ENCODE measurements at regions of chrX and their contacts with region 1.

Region 1: DNA sequence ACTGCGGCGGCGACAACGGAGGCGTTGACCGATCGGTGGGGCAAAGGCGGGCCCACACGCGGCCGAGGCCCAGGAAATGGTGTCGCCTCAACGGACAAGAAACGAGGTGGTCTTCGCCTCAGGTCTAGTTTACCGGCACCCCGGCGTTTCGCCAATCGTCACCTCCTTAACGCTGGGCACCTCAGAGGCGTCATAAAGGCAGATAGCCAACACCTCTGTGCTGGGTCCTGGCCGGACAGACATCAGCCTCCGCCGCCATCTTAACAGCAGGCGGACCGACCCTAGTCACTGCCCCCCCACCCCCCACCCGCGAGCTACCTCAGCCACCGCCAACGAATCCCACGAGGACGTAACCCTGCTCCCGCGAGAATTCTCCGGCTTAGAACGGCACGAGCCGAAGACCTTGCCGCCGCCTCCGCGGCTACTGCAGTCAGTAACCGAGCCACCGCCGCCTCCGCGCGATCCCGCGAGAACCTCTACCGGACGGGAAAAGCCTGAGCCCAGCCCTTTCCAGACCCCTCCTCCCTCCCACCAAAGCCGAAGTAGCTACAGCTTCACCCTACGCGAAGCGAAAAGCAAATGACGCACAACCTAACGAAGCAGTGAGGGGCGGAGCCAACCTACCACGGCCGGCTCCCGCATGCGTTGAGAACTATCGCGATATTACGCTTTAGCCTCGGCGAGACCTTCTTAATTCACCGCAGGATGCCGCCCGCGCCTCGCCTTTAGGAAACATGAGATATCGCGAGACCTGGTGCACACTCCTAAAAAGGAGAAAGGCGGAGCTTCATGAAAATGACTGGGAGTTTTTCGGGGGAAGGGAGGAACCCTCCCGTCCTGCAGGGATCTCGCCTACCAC is 2.7 kb downstream of the HUWE1 start:
- DNase-seq: peak; percentile 69
- ATAC-seq: peak; percentile 68
- H3K4me3 Mint-ChIP-seq: peak overlapping the region; percentile 91
- H3K27ac Mint-ChIP-seq: peak overlapping the region; percentile 97
- H3K4me1 Mint-ChIP-seq: peaks cover 40% of the 10 kb centered on the region
- H3K27me3 Mint-ChIP-seq: no peaks in the 10 kb centered on the region
- CTCF ChIP-seq: no peak

Region 2: DNA sequence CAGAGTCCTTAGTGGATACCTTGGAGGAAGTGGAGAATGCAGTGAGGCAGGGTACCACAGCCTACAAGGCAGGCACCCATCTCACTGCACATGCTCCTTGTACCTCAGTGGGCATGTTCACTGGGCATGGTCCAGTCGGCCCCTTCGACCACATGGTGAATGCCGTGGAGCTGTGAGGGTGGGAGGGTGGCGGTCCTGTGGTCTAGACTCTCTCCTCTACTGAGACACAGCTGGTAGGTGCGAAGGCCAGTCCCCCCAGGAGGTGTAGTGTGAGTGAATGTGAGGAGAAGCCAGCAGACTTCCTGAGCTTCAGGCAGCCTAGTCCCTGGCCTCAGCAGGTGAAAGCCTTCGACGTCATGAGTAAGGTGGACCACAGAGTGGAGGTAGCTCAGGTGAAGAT is 1302.8 kb before region 1 on chrX:
- CTCF ChIA-PET with region 1: no interaction called
- POLR2A ChIA-PET with region 1: no interaction called
- intact Hi-C with region 1: no loop called
- DNase-seq: no peak
- ATAC-seq: no peak
- H3K4me3 Mint-ChIP-seq: no peak overlapping the region
- H3K27ac Mint-ChIP-seq: no peak overlapping the region
- H3K4me1 Mint-ChIP-seq: no peaks in the 10 kb centered on the region
- H3K27me3 Mint-ChIP-seq: no peaks in the 10 kb centered on the region
- CTCF ChIP-seq: no peak

Region 3: DNA sequence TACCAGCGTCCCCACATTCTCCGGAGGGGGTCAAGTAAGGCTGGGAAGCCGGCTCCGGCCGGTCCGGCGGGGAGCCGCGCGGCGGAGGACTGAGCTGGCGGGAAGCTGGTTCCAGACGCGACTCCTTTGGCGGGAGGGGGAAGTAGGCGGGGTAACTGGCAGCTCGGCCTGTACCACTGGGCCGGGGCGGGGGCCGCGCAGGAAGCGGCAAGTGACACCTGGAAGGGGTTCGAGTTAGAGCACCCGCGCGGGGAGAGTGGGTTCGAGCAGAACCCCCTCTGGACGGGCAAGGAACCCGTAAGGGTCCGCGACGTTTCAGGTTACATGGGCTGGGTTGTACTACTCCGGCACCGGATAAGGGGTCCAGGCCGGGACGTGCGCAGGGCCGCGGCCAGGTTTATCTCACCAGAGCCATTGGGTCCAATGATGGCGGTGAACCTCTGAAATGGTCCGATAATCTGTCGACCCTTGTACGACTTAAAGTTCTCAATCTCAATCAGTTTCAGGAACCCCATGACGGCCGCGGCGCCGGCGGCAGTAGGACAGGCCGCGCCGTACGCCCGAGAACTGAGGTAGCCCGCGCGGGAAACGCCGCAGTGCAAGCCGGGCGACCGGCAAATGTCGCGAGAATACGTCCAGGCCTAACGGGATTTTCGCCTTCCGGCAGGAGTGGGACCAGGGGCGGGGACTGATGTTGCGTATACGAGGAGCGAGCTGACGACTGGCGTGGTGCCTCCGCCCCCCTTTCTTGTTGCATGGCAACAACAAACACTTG is 261.5 kb before region 1 on chrX and contains the start of gene SMC1A:
- CTCF ChIA-PET with region 1: no interaction called
- POLR2A ChIA-PET with region 1: interaction called, 8 read pairs
- intact Hi-C with region 1: loop called (anchors 1 kb)
- DNase-seq: peak; percentile 79
- ATAC-seq: peak; percentile 89
- H3K4me3 Mint-ChIP-seq: peak within 1 kb of the TSS; percentile 92
- H3K27ac Mint-ChIP-seq: peak within 1 kb of the TSS; percentile 96
- H3K4me1 Mint-ChIP-seq: peaks cover 29% of the 10 kb centered on the region
- H3K27me3 Mint-ChIP-seq: no peaks in the 10 kb centered on the region
- CTCF ChIP-seq: no peak
- total RNA-seq, gene SMC1A: 75.8 and 84.0 TPM in 2 replicates

Region 4: DNA sequence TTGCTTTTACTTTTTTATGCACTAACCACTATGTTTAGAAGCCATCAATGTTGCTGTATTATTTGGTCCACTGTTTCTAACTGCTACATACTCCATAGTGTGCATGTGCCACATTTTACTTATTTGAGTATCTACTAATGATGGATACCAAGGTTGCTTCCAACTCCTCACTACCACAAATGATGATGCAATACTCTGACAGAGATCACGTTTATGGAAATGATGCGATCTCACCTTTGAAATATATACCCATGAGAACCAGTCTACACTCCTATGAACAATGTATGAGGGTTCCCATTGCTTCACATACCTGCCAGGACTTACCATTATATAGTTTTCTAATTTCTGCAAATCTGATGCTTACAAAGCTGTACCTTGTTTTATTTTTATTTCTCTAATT is 41.4 kb before region 1 on chrX:
- CTCF ChIA-PET with region 1: no interaction called
- POLR2A ChIA-PET with region 1: no interaction called
- intact Hi-C with region 1: no loop called
- DNase-seq: no peak
- ATAC-seq: no peak
- H3K4me3 Mint-ChIP-seq: no peak overlapping the region
- H3K27ac Mint-ChIP-seq: no peak overlapping the region
- H3K4me1 Mint-ChIP-seq: no peaks in the 10 kb centered on the region
- H3K27me3 Mint-ChIP-seq: no peaks in the 10 kb centered on the region
- CTCF ChIP-seq: no peak

Region 5: GRCh38 chrX:53704294-53704693 is 20.5 kb after region 1 on chrX:
- CTCF ChIA-PET with region 1: interaction called, 5 read pairs
- POLR2A ChIA-PET with region 1: interaction called, 15 read pairs
- intact Hi-C with region 1: loop called (anchors 1 kb)
- DNase-seq: no peak
- ATAC-seq: peak; percentile 87
- H3K4me3 Mint-ChIP-seq: no peak overlapping the region
- H3K27ac Mint-ChIP-seq: peak overlapping the region; percentile 60
- H3K4me1 Mint-ChIP-seq: peaks cover 10% of the 10 kb centered on the region
- H3K27me3 Mint-ChIP-seq: no peaks in the 10 kb centered on the region
- CTCF ChIP-seq: no peak

Region 6: GRCh38 chrX:53714580-53715345 is 31.0 kb after region 1 on chrX:
- CTCF ChIA-PET with region 1: interaction called, 9 read pairs
- POLR2A ChIA-PET with region 1: interaction called, 110 read pairs
- intact Hi-C with region 1: loop called (anchors 1 kb)
- DNase-seq: peak; percentile 16
- ATAC-seq: peak; percentile 72
- H3K4me3 Mint-ChIP-seq: peak overlapping the region; percentile 79
- H3K27ac Mint-ChIP-seq: peak overlapping the region; percentile 96
- H3K4me1 Mint-ChIP-seq: peaks cover 49% of the 10 kb centered on the region
- H3K27me3 Mint-ChIP-seq: no peaks in the 10 kb centered on the region
- CTCF ChIP-seq: no peak

Region 7: DNA sequence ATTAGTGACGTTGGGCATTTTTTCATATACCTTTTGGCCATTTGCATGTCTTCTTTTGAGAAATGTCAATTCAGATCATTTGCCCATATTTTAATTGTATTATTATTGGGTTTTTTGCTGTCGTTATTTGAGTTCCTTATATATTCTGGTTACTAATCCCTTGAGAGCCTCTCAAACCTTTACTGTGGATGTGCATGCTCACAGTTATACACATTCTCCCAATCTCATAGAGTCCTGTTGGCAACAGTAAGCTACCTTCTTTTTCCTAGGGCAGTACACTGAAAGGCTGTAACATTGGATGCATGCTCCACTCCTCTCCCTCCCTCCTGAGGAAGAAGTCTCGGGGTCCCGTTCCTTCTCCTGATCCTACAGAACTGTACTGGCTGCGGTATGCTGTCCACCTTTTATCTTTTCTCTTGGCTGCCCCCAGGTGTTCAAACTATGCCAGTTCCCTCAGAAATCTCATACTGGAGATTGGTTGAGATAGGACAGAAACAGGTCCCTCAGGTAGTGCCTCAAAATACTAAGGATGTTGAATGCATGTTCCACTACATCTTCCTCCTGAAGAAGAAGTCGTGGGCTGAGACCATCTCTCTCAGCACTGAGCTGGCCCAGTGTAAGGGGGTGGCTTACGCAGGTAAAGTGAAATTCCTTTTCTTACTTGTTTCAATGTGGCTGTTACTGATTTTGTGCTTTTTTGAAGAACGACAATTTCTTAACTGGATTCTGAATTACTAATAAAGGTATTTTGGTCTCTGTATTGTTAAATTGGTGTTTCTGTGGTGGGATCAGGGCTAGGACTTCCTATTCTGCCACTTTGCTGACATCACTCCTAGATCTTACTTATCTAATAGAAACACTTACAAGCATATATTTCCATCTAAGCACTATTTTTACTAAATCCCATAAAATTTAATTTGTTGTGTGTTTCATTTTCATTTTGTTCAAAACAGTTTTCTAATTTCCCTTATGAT is 148.2 kb after region 1 on chrX:
- CTCF ChIA-PET with region 1: interaction called, 8 read pairs
- POLR2A ChIA-PET with region 1: interaction called, 11 read pairs
- intact Hi-C with region 1: loop called (anchors 1 kb)
- DNase-seq: peak; percentile 15
- ATAC-seq: peak; percentile 67
- H3K4me3 Mint-ChIP-seq: peak overlapping the region; percentile 19
- H3K27ac Mint-ChIP-seq: no peak overlapping the region
- H3K4me1 Mint-ChIP-seq: peaks cover 2% of the 10 kb centered on the region
- H3K27me3 Mint-ChIP-seq: no peaks in the 10 kb centered on the region
- CTCF ChIP-seq: no peak

Region 8: GRCh38 chrX:54999717-55000598 is 1316.2 kb after region 1 on chrX and contains the start of gene APEX2:
- CTCF ChIA-PET with region 1: no interaction called
- POLR2A ChIA-PET with region 1: interaction called, 5 read pairs
- intact Hi-C with region 1: loop called (anchors 10 kb)
- DNase-seq: peak; percentile 74
- ATAC-seq: peak; percentile 95
- H3K4me3 Mint-ChIP-seq: peak within 1 kb of the TSS; percentile 94
- H3K27ac Mint-ChIP-seq: peak within 1 kb of the TSS; percentile 89
- H3K4me1 Mint-ChIP-seq: peaks cover 19% of the 10 kb centered on the region
- H3K27me3 Mint-ChIP-seq: no peaks in the 10 kb centered on the region
- CTCF ChIP-seq: no peak
- total RNA-seq, gene APEX2: 19.6 and 22.2 TPM in 2 replicates

Measured in activated B cell treated with CpG ODN at 0.5 μM for 24 hours (primary cell).